Calu3 (cell line): ENCODE measurements at regions of chr13 and their contacts with region 1.

Region 1: GRCh38 chr13:62357887-62358645 is 942.4 kb upstream of the PCDH20 start:
- DNase-seq: peak; percentile 11
- H3K4me3 Mint-ChIP-seq: no peak overlapping the region
- H3K27ac Mint-ChIP-seq: no peak overlapping the region
- H3K4me1 Mint-ChIP-seq: no peaks in the 10 kb centered on the region
- H3K27me3 Mint-ChIP-seq: no peaks in the 10 kb centered on the region
- CTCF ChIP-seq: no peak

Region 2: DNA sequence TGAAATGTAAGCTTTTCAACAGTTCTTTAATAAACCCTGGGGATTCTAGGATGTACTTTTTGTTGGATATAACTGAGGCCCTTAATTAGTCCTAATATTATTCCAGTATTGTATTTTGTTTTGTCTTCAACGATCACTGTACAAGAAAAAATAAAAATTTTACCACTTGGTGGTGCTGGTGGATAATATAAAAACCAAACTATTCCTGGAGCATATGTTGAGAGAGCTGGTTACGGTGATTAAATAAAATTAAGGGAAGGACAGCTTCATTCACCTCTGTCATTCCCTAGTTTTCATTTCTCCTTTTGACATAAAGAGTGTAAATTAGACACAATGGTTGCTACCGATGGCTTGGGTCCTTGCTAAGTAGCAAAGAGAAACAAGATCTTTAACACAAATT is 343.8 kb before region 1 on chr13:
- CTCF ChIA-PET with region 1: no interaction called
- intact Hi-C with region 1: loop called (anchors 10 kb)
- DNase-seq: no peak
- H3K4me3 Mint-ChIP-seq: no peak overlapping the region
- H3K27ac Mint-ChIP-seq: no peak overlapping the region
- H3K4me1 Mint-ChIP-seq: no peaks in the 10 kb centered on the region
- H3K27me3 Mint-ChIP-seq: no peaks in the 10 kb centered on the region
- CTCF ChIP-seq: no peak

Region 3: GRCh38 chr13:62119739-62120700 is 238.0 kb before region 1 on chr13:
- CTCF ChIA-PET with region 1: no interaction called
- intact Hi-C with region 1: loop called (anchors 1 kb)
- DNase-seq: no peak
- H3K4me3 Mint-ChIP-seq: no peak overlapping the region
- H3K27ac Mint-ChIP-seq: no peak overlapping the region
- H3K4me1 Mint-ChIP-seq: no peaks in the 10 kb centered on the region
- H3K27me3 Mint-ChIP-seq: no peaks in the 10 kb centered on the region
- CTCF ChIP-seq: no peak